Activated CD4-positive, alpha-beta T cell treated with anti-CD3 and anti-CD28 coated beads for 36 hours (primary cell): ENCODE measurements at regions of chr4 and their contacts with region 1.

Region 1: GRCh38 chr4:56435306-56435926 is at the start of gene PPAT:
- DNase-seq: peak; percentile 99
- ATAC-seq: peak; percentile 78
- H3K4me3 Mint-ChIP-seq: peak within 1 kb of the TSS; percentile 88
- H3K27ac Mint-ChIP-seq: peak within 1 kb of the TSS; percentile 97
- H3K4me1 Mint-ChIP-seq: peaks cover 50% of the 10 kb centered on the region
- H3K27me3 Mint-ChIP-seq: no peaks in the 10 kb centered on the region
- total RNA-seq, gene PPAT: 36.8 to 48.2 TPM

Region 2: DNA sequence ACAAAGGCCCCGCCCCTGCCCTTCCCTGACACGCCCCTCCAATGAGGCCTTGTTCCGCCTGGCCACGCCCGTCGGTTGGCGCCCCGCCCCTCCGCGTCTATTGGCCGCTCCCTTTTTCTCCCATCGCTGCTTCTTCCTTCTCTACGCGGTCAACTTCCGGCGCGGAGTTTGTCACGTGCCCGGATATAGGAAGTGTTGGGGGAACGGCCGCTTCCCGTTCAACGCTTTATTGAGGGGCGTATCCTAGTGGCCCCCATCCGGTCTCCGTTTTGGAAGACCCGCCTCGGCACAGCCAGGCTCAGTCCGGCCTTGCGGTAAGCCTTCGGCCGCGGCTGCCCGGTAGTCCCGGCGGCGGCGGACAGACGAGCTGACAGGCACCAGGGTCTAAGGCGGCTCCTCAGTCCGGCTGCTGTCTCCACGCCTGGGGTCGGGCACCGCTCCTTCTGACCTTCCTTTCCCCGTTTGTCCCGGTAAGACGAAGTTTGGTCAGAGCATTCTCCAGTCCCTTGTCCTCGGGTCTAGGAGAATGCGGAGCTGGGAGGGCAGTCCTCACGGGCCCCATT is 581.9 kb before region 1 on chr4 and contains the start of gene EXOC1:
- CTCF ChIA-PET with region 1: no interaction called
- POLR2A ChIA-PET with region 1: no interaction called
- intact Hi-C with region 1: loop called in 1 of 2 experiments (anchors 2 kb)
- DNase-seq: peak; percentile 99
- ATAC-seq: peak; percentile 98
- H3K4me3 Mint-ChIP-seq: no peak within 1 kb of the TSS
- H3K27ac Mint-ChIP-seq: peak within 1 kb of the TSS; percentile 83
- H3K4me1 Mint-ChIP-seq: peaks cover 35% of the 10 kb centered on the region
- H3K27me3 Mint-ChIP-seq: no peaks in the 10 kb centered on the region
- total RNA-seq, gene EXOC1: 19.1 to 21.4 TPM

Region 3: GRCh38 chr4:56445699-56446098 is 10.3 kb after region 1 on chr4:
- CTCF ChIA-PET with region 1: interaction called, 3 read pairs
- POLR2A ChIA-PET with region 1: no interaction called
- intact Hi-C with region 1: loop called in 1 of 2 experiments (anchors 2 kb)
- DNase-seq: no peak
- ATAC-seq: no peak
- H3K4me3 Mint-ChIP-seq: no peak overlapping the region
- H3K27ac Mint-ChIP-seq: no peak overlapping the region
- H3K4me1 Mint-ChIP-seq: peaks cover 37% of the 10 kb centered on the region
- H3K27me3 Mint-ChIP-seq: no peaks in the 10 kb centered on the region

Region 4: DNA sequence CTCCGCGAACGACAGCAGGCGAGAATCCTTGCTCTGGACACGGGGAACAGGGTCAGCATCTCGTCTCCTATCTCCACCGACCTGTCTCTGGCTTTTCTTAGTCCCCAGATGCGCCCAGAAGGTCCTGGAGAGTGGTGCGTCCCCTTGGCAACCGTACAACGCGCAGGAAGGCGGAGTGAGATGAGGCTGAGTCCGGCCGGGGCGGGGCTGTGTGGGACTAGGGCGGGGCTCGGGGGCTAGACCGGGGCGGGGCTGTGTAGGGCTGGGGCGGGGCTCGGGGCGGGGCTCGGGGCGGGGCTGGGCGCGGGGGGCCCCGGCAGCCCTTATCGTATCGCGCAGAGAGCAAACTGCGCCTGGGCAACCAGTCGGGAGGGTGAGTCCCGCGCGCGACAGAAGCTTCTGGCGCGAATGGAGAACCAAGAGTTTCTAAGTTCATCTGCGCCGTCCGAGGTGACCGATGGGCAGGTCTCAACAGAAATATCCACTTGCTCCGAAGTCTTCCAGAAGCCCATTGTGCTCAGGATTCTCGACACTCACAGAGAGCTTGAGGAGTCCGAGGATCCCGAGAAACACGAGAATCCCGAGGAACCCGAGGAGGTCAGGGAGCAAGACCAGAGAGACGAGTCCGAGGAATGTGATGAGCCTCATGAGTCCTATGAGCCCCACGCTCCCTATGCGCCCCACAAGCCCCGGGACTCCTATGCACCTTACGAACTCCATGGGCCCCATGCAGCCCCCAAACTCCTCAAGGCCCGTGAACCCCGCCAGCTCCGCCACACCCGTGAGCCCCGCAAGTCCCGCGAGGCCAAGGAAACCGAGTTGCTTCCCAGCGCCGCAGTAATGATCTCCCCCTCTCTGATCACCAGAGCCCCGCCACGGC is 95.1 kb after region 1 on chr4:
- CTCF ChIA-PET with region 1: interaction called, 5 read pairs
- POLR2A ChIA-PET with region 1: no interaction called
- intact Hi-C with region 1: loop called (anchors 1 to 2 kb)
- DNase-seq: peak; percentile 92
- ATAC-seq: peak; percentile 99
- H3K4me3 Mint-ChIP-seq: no peak overlapping the region
- H3K27ac Mint-ChIP-seq: peak overlapping the region; percentile 11
- H3K4me1 Mint-ChIP-seq: peaks cover 3% of the 10 kb centered on the region
- H3K27me3 Mint-ChIP-seq: peaks cover 3% of the 10 kb centered on the region

Region 5: GRCh38 chr4:56821381-56822243 is 386.2 kb after region 1 on chr4 and contains the start of gene SPINK2:
- CTCF ChIA-PET with region 1: interaction called, 3 read pairs
- POLR2A ChIA-PET with region 1: no interaction called
- intact Hi-C with region 1: loop called in 1 of 2 experiments (anchors 1 kb)
- DNase-seq: peak; percentile 83
- ATAC-seq: peak; percentile 79
- H3K4me3 Mint-ChIP-seq: peak within 1 kb of the TSS; percentile 69
- H3K27ac Mint-ChIP-seq: no peak within 1 kb of the TSS
- H3K4me1 Mint-ChIP-seq: peaks cover 34% of the 10 kb centered on the region
- H3K27me3 Mint-ChIP-seq: peaks cover 11% of the 10 kb centered on the region
- total RNA-seq, gene SPINK2: 1.3 to 1.9 TPM